ENCODE measurements at regions of chr17 and their contacts with region 1.

Region 1: DNA sequence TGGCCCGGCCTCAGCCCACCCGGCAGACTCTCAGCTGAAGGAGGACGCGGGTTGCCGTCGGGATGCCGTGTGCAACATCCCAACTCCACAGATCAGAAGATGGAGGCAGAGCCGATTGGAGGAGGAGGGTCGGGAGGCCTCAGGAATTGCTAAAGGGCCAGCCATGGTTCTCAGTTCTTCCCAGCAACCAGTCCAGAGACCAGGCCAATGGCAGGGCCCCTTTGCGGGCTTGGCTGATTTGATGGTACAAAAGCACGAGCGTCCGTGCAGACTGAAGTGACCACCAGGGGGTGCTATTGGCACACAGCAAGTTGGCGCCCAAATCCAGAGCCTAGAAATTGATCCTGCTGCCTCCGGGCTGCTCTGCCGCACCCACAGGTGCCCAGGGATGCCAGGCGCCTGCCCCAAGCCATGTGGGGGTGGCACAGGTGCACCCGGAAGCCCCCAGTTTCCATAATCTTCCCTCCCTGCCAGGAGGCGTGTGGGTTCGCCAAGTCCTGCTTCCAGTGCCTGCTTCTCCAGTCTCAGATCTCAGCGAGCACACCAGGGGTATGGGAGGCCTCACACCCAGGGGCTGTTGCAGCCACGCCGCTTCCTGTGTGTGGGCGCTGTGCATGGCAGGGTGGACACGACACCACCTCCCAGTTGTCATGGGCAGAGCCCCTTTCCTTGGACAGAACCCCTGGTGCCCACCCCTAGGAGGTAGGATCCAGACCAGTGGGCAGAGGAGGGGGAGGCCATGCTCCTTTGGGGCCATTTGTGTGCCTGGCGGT is 7.1 kb upstream of the TEX19 start:
- DNase-seq: peak; percentile 68 to 93 (median 78)
- ATAC-seq: peak; percentile 92
- H3K4me3 ChIP-seq: no peak overlapping the region
- H3K4me3 Mint-ChIP-seq: no peak overlapping the region
- H3K27ac ChIP-seq: no peak overlapping the region
- H3K27ac Mint-ChIP-seq: no peak overlapping the region
- H3K4me1 ChIP-seq: peaks cover 13% of the 10 kb centered on the region
- H3K4me1 Mint-ChIP-seq: no peaks in the 10 kb centered on the region
- H3K27me3 ChIP-seq: peaks cover 0 to 4% of the 10 kb centered on the region in 2 experiments
- H3K27me3 Mint-ChIP-seq: peaks cover 5% of the 10 kb centered on the region
- CTCF ChIP-seq: peak; percentile 84

Region 2: DNA sequence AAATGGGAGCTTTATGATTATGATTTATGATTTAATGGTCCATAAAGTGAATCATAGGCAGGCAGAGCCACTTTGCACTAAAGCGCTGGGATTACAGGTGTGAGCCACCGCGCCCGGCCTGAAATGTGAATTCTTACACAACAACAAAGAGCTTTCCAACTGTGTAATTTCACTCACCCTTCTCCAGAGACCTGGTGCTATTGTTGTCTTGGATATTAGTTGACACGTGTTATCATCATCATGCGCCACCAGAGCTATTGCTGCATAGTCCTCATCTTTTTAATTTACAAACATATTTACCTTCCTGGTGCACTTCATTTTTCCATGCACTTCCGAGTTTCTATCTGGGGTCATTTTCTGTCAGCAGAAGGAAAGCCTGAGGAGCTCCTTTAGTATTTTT is 14.8 kb after region 1 on chr17:
- CTCF ChIA-PET with region 1: no interaction called
- POLR2A ChIA-PET with region 1: no interaction called
- intact Hi-C with region 1: no loop called
- DNase-seq: no peak
- ATAC-seq: no peak
- H3K4me3 ChIP-seq: no peak overlapping the region
- H3K4me3 Mint-ChIP-seq: no peak overlapping the region
- H3K27ac ChIP-seq: no peak overlapping the region
- H3K27ac Mint-ChIP-seq: no peak overlapping the region
- H3K4me1 ChIP-seq: peaks cover 14% of the 10 kb centered on the region
- H3K4me1 Mint-ChIP-seq: peaks cover 10% of the 10 kb centered on the region
- H3K27me3 ChIP-seq: peaks cover 12 to 24% of the 10 kb centered on the region in 2 experiments
- H3K27me3 Mint-ChIP-seq: peaks cover 33% of the 10 kb centered on the region
- CTCF ChIP-seq: no peak

Region 3: DNA sequence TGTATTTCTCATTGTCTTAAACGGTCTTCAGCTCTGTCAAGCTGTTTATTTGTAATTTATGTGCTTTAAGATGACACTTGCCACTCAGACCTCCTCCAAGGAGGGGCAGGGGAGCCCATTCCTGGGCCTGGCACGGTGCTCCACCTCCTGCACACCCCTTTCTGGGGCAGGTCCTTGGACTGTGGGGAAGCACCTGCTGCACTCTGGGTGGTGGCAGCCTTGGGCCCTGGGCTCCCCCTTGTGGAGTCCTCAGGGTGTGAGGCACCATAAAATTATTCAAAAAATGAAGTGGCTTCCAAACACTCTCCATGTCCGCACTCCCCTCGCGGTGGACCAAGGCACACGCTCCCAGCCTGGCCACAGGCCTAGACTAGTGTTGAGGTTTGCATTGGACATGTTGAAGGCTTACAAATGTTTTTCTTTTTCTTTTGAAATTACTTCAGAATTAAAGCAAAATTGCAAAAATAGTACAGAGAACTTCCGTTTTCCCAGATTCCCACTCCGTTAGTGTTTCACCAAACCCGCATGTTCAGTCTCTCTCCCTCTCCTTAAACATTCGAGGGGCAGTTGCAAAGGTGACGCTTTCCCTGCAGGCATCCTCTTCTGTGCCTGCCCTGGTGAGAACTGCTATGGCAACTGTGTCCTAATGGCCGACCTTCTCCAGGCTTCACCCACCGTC is 200.0 kb after region 1 on chr17:
- CTCF ChIA-PET with region 1: no interaction called
- POLR2A ChIA-PET with region 1: no interaction called
- intact Hi-C with region 1: loop called (anchors 1 kb)
- DNase-seq: peak; percentile 59 to 88 (median 76)
- ATAC-seq: peak; percentile 100
- H3K4me3 ChIP-seq: no peak overlapping the region
- H3K4me3 Mint-ChIP-seq: no peak overlapping the region
- H3K27ac ChIP-seq: no peak overlapping the region
- H3K27ac Mint-ChIP-seq: peak overlapping the region; percentile 56
- H3K4me1 ChIP-seq: peaks cover 24% of the 10 kb centered on the region
- H3K4me1 Mint-ChIP-seq: peaks cover 40% of the 10 kb centered on the region
- H3K27me3 ChIP-seq: no peaks in the 10 kb centered on the region
- H3K27me3 Mint-ChIP-seq: no peaks in the 10 kb centered on the region
- CTCF ChIP-seq: peak; percentile 77

Region 4: GRCh38 chr17:82775001-82775823 is 423.3 kb after region 1 on chr17:
- CTCF ChIA-PET with region 1: no interaction called
- POLR2A ChIA-PET with region 1: no interaction called
- intact Hi-C with region 1: loop called in 1 of 2 experiments (anchors 2 kb)
- DNase-seq: peak in 12 of 14 experiments; percentile 15 to 62 (median 31)
- ATAC-seq: no peak
- H3K4me3 ChIP-seq: peak overlapping the region; percentile 9
- H3K4me3 Mint-ChIP-seq: no peak overlapping the region
- H3K27ac ChIP-seq: no peak overlapping the region
- H3K27ac Mint-ChIP-seq: no peak overlapping the region
- H3K4me1 ChIP-seq: peaks cover 19% of the 10 kb centered on the region
- H3K4me1 Mint-ChIP-seq: peaks cover 10% of the 10 kb centered on the region
- H3K27me3 ChIP-seq: no peaks in the 10 kb centered on the region
- H3K27me3 Mint-ChIP-seq: no peaks in the 10 kb centered on the region
- CTCF ChIP-seq: peak; percentile 77